SK-N-SH (cell line): ENCODE measurements at regions of chr2 and their contacts with region 1.

Region 1: GRCh38 chr2:16617282-16618261 is 48.1 kb downstream of the CYRIA start:
- DNase-seq: peak; percentile 56
- H3K4me3 ChIP-seq: no peak overlapping the region
- H3K27ac ChIP-seq: no peak overlapping the region
- H3K4me1 ChIP-seq: peaks cover 0 to 6% of the 10 kb centered on the region in 2 experiments; a peak in 2 of 4 replicates
- H3K27me3 ChIP-seq: no peaks in the 10 kb centered on the region; the same call in 1 of the 2 replicates
- CTCF ChIP-seq: peak; percentile 59
- EP300 ChIP-seq: no peak
- RAD21 ChIP-seq: peak; percentile 69

Region 2: DNA sequence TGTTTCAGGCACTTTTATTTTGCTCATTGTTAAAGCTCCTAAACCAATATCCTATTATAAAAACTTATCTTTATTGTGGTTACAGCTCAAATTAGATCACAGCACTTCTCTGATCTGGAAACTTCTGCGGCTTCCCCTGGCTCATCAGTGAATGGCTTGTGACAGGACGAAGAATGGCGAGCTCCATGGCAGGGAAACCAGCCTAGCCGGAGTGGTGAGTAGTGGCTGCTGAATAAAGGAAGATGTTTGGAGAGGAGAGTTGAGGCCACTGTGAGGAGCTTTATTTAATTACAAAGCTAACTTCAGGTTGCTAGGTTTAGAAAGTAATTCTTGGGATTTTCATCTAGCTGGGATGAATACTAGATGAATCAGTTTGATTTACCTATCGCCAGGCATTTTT is 165.5 kb before region 1 on chr2:
- CTCF ChIA-PET with region 1: no interaction called
- POLR2A ChIA-PET with region 1: no interaction called
- DNase-seq: no peak
- H3K4me3 ChIP-seq: no peak overlapping the region
- H3K27ac ChIP-seq: no peak overlapping the region
- H3K4me1 ChIP-seq: no peaks in the 10 kb centered on the region
- H3K27me3 ChIP-seq: no peaks in the 10 kb centered on the region
- CTCF ChIP-seq: no peak
- EP300 ChIP-seq: no peak
- RAD21 ChIP-seq: no peak

Region 3: GRCh38 chr2:16763493-16763899 is 145.9 kb after region 1 on chr2:
- CTCF ChIA-PET with region 1: interaction called, 341 read pairs
- POLR2A ChIA-PET with region 1: no interaction called
- DNase-seq: no peak
- H3K4me3 ChIP-seq: no peak overlapping the region
- H3K27ac ChIP-seq: no peak overlapping the region
- H3K4me1 ChIP-seq: no peaks in the 10 kb centered on the region; a peak in 1 of 4 replicates
- H3K27me3 ChIP-seq: no peaks in the 10 kb centered on the region
- CTCF ChIP-seq: no peak
- EP300 ChIP-seq: no peak
- RAD21 ChIP-seq: no peak